Left lung (tissue), 14 donors: ENCODE measurements at regions of chr5 and their contacts with region 1.

Region 1: GRCh38 chr5:151239237-151239861 is 13.6 kb upstream of the GM2A start:
- DNase-seq: peak; percentile 56 to 94 (median 72)
- ATAC-seq: peak; percentile 54
- H3K4me3 ChIP-seq: no peak overlapping the region
- H3K27ac ChIP-seq: no peak overlapping the region
- H3K4me1 ChIP-seq: peaks cover 0 to 39% of the 10 kb centered on the region in 2 donors
- H3K27me3 ChIP-seq: no peaks in the 10 kb centered on the region
- CTCF ChIP-seq: peak; percentile 48 to 94

Region 2: DNA sequence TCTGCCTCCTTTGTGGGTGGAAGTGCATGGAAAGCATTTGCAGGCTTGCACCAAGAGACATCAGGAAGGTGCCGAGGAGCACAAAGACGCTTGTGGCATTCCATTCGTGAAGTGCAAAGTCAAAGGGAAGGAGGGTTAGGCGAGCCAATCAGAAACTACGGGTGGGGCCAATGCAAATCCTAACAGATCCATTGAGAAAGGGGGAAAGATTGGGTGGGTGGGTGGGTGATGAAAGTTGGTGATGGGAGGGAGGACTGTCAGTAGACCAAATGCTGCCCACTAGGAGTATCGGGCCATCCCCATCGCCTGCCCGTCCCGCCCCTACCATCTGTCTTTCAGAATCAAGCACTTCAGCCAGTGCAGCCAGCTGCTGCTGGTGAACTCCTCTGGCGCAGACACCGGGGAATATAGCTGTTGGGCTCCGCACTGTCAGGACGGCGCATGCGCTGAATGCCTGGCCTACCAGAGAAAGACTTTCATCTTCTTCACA is 64.7 kb before region 1 on chr5:
- intact Hi-C with region 1: loop called in 1 of 2 experiments (anchors 10 kb)
- DNase-seq: peak in 1 of 4 donors; percentile 18
- ATAC-seq: peak; percentile 24
- H3K4me3 ChIP-seq: no peak overlapping the region
- H3K27ac ChIP-seq: no peak overlapping the region
- H3K4me1 ChIP-seq: peaks cover 0 to 12% of the 10 kb centered on the region in 2 donors
- H3K27me3 ChIP-seq: no peaks in the 10 kb centered on the region
- CTCF ChIP-seq: no peak

Region 3: DNA sequence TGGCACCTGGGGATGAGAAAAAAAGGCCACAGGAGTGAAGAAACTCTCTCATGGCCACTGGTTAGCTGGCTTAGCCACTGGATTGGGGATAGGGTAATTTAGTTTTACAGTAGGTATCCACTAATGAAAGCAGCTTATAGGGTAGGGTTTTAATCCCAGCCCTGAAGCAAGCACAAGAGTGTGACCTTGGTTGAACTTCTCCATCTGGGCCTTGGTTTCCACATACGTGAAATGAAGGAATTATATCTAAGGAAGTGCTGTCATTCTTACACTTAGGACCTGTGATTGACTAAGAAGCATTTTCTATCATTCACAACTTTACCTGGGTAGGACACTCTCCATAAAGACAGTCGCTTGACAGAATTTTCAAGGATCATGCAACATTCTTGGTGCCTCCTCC is 302.2 kb after region 1 on chr5:
- intact Hi-C with region 1: no loop called
- DNase-seq: no peak
- ATAC-seq: no peak
- H3K4me3 ChIP-seq: no peak overlapping the region
- H3K27ac ChIP-seq: no peak overlapping the region
- H3K4me1 ChIP-seq: no peaks in the 10 kb centered on the region
- H3K27me3 ChIP-seq: no peaks in the 10 kb centered on the region
- CTCF ChIP-seq: no peak